Panc1 (cell line): ENCODE measurements at regions of chr3 and their contacts with region 1.

Region 1: DNA sequence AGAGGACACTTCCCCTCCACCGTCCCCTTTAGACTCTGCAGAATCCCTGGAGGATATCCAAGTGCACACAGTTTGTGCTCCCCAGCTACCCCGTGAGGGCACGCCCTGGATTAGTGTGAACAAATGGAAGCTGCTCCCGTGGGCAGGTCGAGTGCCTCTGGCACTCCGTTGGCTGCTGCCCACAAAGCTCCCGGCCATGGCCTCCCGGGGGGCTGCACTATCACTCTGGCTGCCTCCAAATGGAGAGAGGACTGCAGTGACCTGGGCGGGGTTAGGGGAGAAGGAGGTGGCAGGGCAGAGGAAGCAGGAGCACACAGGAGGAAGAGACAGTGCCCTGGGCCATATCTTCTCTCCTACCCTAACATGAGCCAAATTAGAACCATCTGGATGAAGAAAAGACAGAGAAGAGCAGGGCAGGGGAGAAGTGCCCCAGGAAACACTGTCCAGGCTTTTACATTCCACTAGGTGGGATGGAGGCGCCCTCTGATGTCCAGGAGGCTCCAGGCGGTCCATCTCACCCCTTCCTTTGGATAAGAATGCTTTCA is 29.4 kb upstream of the ACAD9 start:
- DNase-seq: no peak
- ATAC-seq: peak; percentile 52; the same call in 1 of the 2 replicates
- H3K4me3 ChIP-seq: no peak overlapping the region
- H3K27ac ChIP-seq: no peak overlapping the region
- H3K4me1 ChIP-seq: peaks cover 13% of the 10 kb centered on the region; the same call in 1 of the 2 replicates
- H3K27me3 ChIP-seq: no peaks in the 10 kb centered on the region
- CTCF ChIP-seq: no peak; the same call in 1 of the 2 replicates

Region 2: GRCh38 chr3:128794770-128795649 is 55.0 kb before region 1 on chr3:
- CTCF ChIA-PET with region 1: no interaction called
- POLR2A ChIA-PET with region 1: no interaction called
- in situ Hi-C with region 1: loop called (anchors 5 kb)
- intact Hi-C with region 1: no loop called
- DNase-seq: peak; percentile 54
- ATAC-seq: peak; percentile 97
- H3K4me3 ChIP-seq: no peak overlapping the region
- H3K27ac ChIP-seq: no peak overlapping the region; the same call in 1 of the 2 replicates
- H3K4me1 ChIP-seq: peaks cover 15% of the 10 kb centered on the region; the same call in 1 of the 2 replicates
- H3K27me3 ChIP-seq: no peaks in the 10 kb centered on the region
- CTCF ChIP-seq: peak; percentile 91